Naive thymus-derived CD4-positive, alpha-beta T cell (primary cell): ENCODE measurements at regions of chr15 and their contacts with region 1.

Region 1: GRCh38 chr15:38252481-38253412 is at the start of gene SPRED1:
- DNase-seq: peak in 8 of 9 donors; percentile 8 to 28 (median 9)
- ATAC-seq: peak; percentile 12
- H3K4me3 ChIP-seq: peak within 1 kb of the TSS; percentile 78
- H3K4me3 Mint-ChIP-seq: peak within 1 kb of the TSS; percentile 80 to 97 (median 90)
- H3K27ac ChIP-seq: no peak within 1 kb of the TSS
- H3K27ac Mint-ChIP-seq: peak within 1 kb of the TSS in 8 of 9 donors; percentile 26 to 88 (median 64)
- H3K4me1 ChIP-seq: peaks cover 17 to 19% of the 10 kb centered on the region in 2 donors
- H3K4me1 Mint-ChIP-seq: peaks cover 25 to 36% (median 27%) of the 10 kb centered on the region in 7 donors
- H3K27me3 ChIP-seq: no peaks in the 10 kb centered on the region
- H3K27me3 Mint-ChIP-seq: peaks cover 18 to 73% (median 43%) of the 10 kb centered on the region in 5 donors
- total RNA-seq, gene SPRED1: 0.07 to 2.6 (median 0.95) TPM

Region 2: DNA sequence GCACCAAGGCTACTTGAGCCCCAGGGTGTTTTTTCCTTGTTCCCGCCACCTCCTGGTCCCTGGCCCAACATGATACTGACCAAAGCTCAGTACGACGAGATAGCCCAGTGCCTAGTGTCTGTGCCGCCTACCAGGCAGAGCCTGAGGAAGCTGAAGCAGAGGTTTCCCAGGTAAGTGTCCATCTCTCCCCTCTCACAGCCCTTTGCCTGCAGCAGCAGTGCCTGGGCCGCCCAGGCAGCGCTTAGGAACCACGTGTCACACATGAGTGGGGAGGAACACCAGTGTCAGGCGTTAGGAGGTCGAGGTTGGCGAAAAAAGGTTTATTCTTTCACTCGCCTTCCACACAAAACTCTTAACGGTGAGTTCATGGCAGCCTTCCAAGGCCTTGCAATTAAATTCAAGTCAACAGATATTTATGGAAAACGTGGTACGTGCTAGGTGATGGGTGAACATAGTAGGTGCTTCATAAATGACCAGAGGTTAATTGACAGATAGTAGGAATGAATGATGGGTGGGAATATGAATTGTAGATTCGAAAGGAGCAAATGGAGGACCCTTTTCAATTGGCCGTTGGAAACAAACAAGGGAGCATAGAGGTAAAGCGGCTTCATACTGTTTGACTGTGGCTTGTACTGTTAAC is 1672.8 kb before region 1 on chr15:
- CTCF ChIA-PET with region 1: no interaction called
- POLR2A ChIA-PET with region 1: no interaction called
- intact Hi-C with region 1: loop called in 1 of 2 experiments (anchors 2 kb)
- DNase-seq: peak in 1 of 9 donors; percentile 27
- ATAC-seq: peak; percentile 23
- H3K4me3 ChIP-seq: peak overlapping the region; percentile 92
- H3K4me3 Mint-ChIP-seq: peak overlapping the region; percentile 85 to 94 (median 92)
- H3K27ac ChIP-seq: peak overlapping the region; percentile 85
- H3K27ac Mint-ChIP-seq: peak overlapping the region; percentile 56 to 96 (median 91)
- H3K4me1 ChIP-seq: peaks cover 6% of the 10 kb centered on the region in 2 donors
- H3K4me1 Mint-ChIP-seq: peaks cover 7 to 34% (median 26%) of the 10 kb centered on the region in 7 donors
- H3K27me3 ChIP-seq: no peaks in the 10 kb centered on the region
- H3K27me3 Mint-ChIP-seq: peaks cover 0 to 4% (median 0%) of the 10 kb centered on the region in 5 donors

Region 3: DNA sequence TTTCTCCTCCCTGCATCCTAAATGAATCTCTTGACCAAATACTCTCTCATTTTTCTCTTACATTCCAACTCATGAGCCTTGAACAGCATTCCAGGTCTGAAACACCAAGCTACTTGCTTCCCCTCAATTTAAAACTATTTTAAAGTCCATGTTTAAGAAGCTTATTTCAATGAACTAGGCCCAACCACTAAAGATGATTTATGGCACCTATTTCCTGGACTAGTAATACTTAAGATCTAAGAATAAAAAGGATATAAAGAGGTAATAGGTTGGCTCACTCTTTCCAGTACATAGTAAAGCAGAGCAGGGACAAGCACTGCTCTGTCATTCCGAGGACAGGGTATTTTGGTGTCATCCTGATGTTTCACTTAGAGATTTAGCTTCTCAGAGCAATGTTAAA is 537.6 kb before region 1 on chr15:
- CTCF ChIA-PET with region 1: no interaction called
- POLR2A ChIA-PET with region 1: no interaction called
- intact Hi-C with region 1: no loop called
- DNase-seq: no peak
- ATAC-seq: no peak
- H3K4me3 ChIP-seq: no peak overlapping the region
- H3K4me3 Mint-ChIP-seq: no peak overlapping the region
- H3K27ac ChIP-seq: no peak overlapping the region
- H3K27ac Mint-ChIP-seq: no peak overlapping the region
- H3K4me1 ChIP-seq: no peaks in the 10 kb centered on the region
- H3K4me1 Mint-ChIP-seq: no peaks in the 10 kb centered on the region
- H3K27me3 ChIP-seq: no peaks in the 10 kb centered on the region
- H3K27me3 Mint-ChIP-seq: peaks cover 0 to 14% (median 2%) of the 10 kb centered on the region in 5 donors

Region 4: DNA sequence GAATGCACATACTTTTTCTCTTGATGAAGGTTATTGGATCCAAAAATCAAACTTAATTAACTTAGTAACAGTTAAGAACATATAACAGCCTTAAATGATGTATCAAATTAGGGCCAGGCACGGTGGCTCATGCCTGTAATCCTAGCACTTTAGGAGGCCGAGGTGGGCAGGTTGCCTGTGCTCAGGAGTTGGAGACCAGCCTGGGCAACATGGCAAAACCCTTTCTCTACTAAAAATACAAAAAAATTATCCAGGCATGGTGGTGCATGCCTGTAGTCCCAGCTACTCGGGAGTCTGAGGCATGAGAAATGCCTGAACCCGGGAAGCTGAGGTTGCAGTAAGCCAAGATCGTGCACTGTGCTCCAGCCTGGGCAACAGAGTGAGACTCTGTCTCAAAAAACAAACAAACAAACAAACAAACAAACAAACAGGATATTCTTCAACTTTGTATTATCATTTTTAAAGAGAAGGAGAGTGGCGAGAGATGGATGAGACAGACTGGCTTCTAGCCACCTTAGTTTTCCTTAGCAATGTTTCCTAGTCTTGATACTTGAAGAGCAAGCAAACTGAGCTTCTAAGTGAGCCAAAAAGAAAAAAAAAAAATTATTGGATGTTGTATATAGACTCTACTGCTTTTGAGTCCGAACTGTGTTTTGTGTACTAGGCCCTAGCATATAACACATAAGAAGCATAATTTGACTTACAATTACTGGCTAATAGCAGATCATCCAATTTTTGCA is 13.7 kb after region 1 on chr15:
- CTCF ChIA-PET with region 1: no interaction called
- POLR2A ChIA-PET with region 1: no interaction called
- intact Hi-C with region 1: no loop called
- DNase-seq: no peak
- ATAC-seq: no peak
- H3K4me3 ChIP-seq: no peak overlapping the region
- H3K4me3 Mint-ChIP-seq: no peak overlapping the region
- H3K27ac ChIP-seq: no peak overlapping the region
- H3K27ac Mint-ChIP-seq: no peak overlapping the region
- H3K4me1 ChIP-seq: no peaks in the 10 kb centered on the region
- H3K4me1 Mint-ChIP-seq: no peaks in the 10 kb centered on the region
- H3K27me3 ChIP-seq: no peaks in the 10 kb centered on the region
- H3K27me3 Mint-ChIP-seq: peaks cover 0 to 9% (median 4%) of the 10 kb centered on the region in 5 donors

Region 5: GRCh38 chr15:38354315-38354929 is 101.7 kb after region 1 on chr15:
- CTCF ChIA-PET with region 1: no interaction called
- POLR2A ChIA-PET with region 1: no interaction called
- intact Hi-C with region 1: loop called in 1 of 2 experiments (anchors 2 kb)
- DNase-seq: peak in 7 of 9 donors; percentile 14 to 46 (median 38)
- ATAC-seq: peak; percentile 57
- H3K4me3 ChIP-seq: no peak overlapping the region
- H3K4me3 Mint-ChIP-seq: no peak overlapping the region
- H3K27ac ChIP-seq: no peak overlapping the region
- H3K27ac Mint-ChIP-seq: peak overlapping the region in 1 of 9 donors; percentile 30
- H3K4me1 ChIP-seq: no peaks in the 10 kb centered on the region
- H3K4me1 Mint-ChIP-seq: no peaks in the 10 kb centered on the region
- H3K27me3 ChIP-seq: no peaks in the 10 kb centered on the region
- H3K27me3 Mint-ChIP-seq: peaks cover 3 to 23% (median 12%) of the 10 kb centered on the region in 5 donors